ENCODE measurements at regions of chr5 and their contacts with region 1.

Region 1: GRCh38 chr5:146049014-146049703 is 56.2 kb downstream of the PLAC8L1 start:
- DNase-seq: no peak
- ATAC-seq: peak; percentile 42 to 73
- H3K4me3 ChIP-seq: no peak overlapping the region
- H3K27ac ChIP-seq: no peak overlapping the region
- H3K4me1 ChIP-seq: no peaks in the 10 kb centered on the region
- H3K27me3 ChIP-seq: no peaks in the 10 kb centered on the region

Region 2: DNA sequence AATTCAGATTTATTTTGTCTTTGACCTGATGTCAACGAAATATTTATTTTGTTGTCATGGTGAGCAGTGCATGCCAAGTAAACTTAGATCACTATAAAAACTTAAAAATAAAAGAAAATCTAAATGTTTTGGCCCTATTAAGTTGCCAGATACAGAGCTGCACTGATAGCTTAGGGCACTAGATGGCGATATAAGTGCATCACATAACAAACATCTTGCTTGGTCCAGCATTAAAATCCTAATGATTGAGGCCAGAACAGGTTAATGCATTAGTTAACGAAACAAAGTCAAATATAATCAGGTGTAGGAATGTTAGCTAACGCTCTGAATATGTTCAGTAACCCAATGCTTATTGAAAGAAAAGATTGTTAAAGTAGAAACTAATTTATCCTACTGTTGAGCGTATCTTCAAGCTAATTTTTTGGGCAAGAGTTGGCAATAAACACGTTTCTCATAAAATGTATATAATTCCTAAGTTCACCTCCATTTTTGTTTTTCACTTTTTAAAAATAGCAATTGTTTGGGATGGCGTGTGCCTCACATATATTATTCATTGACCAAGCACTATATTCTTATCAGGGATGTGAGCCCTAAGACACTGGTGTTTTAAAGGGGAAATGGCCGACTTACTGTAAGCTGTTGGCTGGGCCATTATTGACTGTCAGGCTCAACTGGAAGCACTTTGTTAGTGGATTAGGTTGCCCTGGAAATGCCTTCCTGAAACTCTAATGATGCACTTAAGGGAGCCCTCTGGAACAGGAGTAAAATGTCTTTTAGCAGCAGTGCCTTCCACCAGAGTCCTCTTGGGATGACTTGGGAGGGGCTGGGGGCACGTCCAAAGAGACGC is 1845.2 kb before region 1 on chr5:
- intact Hi-C with region 1: loop called in 1 of 4 experiments (anchors 5 kb)
- DNase-seq: no peak
- ATAC-seq: peak; percentile 61 to 73
- H3K4me3 ChIP-seq: no peak overlapping the region
- H3K27ac ChIP-seq: no peak overlapping the region
- H3K4me1 ChIP-seq: no peaks in the 10 kb centered on the region
- H3K27me3 ChIP-seq: no peaks in the 10 kb centered on the region

Region 3: DNA sequence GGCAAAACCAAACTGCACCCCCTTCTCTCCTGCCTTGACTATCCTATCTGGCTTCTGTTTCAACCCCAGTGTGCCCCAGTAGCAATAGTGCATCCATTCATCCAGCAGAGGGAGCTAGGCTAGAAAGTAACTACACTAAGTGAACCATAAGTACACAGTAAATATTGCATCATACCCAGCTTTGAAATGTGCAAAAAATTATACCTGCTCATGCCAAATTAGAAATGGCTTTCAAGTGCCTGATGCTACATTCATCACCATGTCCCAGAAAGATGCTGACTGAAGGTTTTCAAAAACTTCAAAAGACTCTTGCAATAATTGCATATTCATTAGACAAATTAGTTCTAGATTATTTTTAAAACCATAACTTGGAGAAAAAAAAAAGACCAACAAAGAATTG is 367.5 kb before region 1 on chr5:
- intact Hi-C with region 1: loop called in 1 of 4 experiments (anchors 10 kb)
- DNase-seq: peak in 2 of 3 donors; percentile 22 to 48
- ATAC-seq: peak; percentile 76 to 89
- H3K4me3 ChIP-seq: no peak overlapping the region
- H3K27ac ChIP-seq: no peak overlapping the region
- H3K4me1 ChIP-seq: no peaks in the 10 kb centered on the region
- H3K27me3 ChIP-seq: no peaks in the 10 kb centered on the region

Region 4: DNA sequence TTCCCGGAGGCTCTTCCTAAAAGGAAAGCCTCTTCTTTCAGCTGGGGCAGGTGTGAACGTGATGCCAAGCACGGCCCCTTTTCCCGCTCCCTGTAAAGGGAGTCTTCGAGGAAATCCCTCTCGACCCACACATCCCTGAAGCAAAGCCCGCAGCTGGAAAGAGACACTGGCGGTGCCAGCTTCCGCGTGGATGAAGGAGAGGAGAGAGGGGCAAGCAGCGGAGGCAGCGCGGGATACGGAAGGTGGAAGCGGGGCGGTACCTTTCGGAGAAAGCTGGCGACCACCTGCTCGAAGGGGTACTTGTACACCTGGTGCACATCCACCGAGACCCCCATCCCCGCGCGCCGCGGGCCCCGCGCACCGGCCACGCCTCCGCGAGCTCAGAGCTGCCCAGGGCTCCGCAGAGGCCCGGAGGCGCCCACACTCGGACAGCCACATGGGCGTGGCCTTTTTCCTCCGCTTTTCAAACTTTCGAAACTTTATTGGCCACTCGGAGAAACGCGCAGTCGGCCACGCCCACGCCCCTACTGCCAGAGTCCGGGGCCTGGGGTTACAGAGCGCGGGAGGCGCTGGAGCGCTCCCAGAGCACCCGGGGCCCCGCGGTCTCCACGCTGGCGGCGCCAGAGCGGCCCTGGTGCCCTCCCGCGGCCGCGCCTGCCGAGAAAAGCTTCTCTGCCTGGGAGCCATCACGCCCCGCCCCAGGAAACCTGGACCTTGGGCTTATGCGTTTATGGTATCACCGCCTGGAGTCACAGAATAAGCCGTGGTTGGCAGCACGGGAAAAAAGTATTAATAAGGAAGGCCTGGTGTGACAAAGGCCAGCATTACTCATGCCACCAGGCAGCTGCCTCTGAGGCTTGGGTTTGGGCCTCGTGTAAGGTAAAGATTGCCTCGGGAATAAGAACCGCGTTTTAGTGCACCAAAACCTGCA is 214.0 kb before region 1 on chr5 and contains the start of gene PRELID2:
- intact Hi-C with region 1: loop called in 2 of 4 experiments (anchors 10 kb)
- DNase-seq: peak; percentile 90 to 96 (median 94)
- ATAC-seq: peak; percentile 94 to 97
- H3K4me3 ChIP-seq: peak within 1 kb of the TSS; percentile 91
- H3K27ac ChIP-seq: peak within 1 kb of the TSS; percentile 16
- H3K4me1 ChIP-seq: no peaks in the 10 kb centered on the region
- H3K27me3 ChIP-seq: no peaks in the 10 kb centered on the region
- total RNA-seq, gene PRELID2: 39.1 to 85.4 (median 44.8) TPM

Region 5: DNA sequence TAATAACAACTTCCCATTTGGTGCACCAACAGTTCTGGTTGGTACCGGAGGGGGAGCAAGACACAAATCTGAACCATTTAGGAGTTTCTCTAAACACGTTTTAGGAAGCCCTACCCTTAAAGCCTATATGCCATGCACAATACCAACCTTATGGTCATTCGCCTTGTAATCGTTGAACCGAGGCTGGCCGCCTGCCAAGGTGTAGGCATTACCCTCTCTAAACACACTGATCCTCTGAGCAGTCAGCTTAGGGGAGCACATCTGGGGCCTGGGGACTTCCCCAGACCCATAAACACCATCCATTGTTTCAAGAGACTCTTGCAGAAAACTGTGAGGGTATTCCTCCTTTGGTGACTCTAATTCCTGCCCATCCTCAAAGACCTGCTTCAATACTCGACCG is 176.7 kb before region 1 on chr5:
- intact Hi-C with region 1: no loop called
- DNase-seq: peak in 2 of 3 donors; percentile 29 to 47
- ATAC-seq: no peak
- H3K4me3 ChIP-seq: no peak overlapping the region
- H3K27ac ChIP-seq: no peak overlapping the region
- H3K4me1 ChIP-seq: no peaks in the 10 kb centered on the region
- H3K27me3 ChIP-seq: no peaks in the 10 kb centered on the region

Region 6: GRCh38 chr5:146068977-146069779 is 20.0 kb after region 1 on chr5:
- intact Hi-C with region 1: no loop called
- DNase-seq: no peak
- ATAC-seq: no peak
- H3K4me3 ChIP-seq: no peak overlapping the region
- H3K27ac ChIP-seq: peak overlapping the region; percentile 51
- H3K4me1 ChIP-seq: peaks cover 6% of the 10 kb centered on the region
- H3K27me3 ChIP-seq: no peaks in the 10 kb centered on the region

Region 7: DNA sequence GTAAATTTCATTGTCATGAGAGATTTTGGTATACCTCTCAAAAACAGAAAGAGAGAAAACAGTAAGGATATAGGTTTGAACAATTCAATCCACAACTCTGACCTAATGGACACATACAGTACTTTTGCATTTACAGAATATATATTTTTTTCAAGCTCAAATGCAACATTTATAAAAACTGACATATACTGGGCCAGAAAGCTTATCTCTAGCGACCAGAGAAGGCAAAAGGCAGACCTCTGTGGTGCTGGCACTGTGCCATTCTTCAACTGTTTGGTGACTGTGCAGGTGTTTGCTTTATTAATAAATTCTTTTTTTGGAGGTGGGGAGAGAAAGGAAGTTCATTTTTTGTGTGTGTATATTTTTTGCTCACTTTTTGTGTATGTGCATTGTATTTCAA is 62.2 kb after region 1 on chr5:
- intact Hi-C with region 1: loop called in 1 of 4 experiments (anchors 10 kb)
- DNase-seq: no peak
- ATAC-seq: no peak
- H3K4me3 ChIP-seq: no peak overlapping the region
- H3K27ac ChIP-seq: no peak overlapping the region
- H3K4me1 ChIP-seq: peaks cover 2% of the 10 kb centered on the region
- H3K27me3 ChIP-seq: no peaks in the 10 kb centered on the region

Region 8: DNA sequence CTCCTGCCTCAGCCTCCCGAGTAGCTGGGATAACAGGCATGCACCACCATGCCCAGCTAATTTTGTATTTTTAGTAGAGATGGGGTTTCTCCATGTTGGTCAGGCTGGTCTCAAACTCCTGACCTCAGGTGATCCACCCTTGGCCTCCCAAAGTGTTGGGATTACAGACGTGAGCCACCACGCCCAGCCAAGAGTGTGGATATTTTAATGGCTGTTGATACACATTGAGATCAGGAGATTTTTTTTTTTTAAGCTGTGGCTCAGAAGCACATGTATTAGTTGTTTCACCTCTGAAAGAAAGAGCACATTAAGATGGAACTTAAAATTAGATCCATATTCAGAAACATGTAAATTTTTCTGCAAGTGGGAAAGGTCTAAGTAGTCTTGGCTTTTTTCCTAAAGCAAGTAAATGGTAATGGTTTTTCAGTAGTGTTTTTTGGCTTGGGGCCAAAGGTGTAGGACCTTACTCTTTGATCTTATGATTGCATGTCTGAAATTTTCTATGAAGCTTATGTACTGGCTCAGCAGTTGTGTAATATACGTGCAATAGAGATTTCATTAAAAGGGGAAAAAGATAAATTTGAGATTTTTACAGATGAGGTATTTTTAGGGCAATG is 164.2 kb after region 1 on chr5:
- intact Hi-C with region 1: no loop called
- DNase-seq: no peak
- ATAC-seq: no peak
- H3K4me3 ChIP-seq: no peak overlapping the region
- H3K27ac ChIP-seq: no peak overlapping the region
- H3K4me1 ChIP-seq: peaks cover 1% of the 10 kb centered on the region
- H3K27me3 ChIP-seq: no peaks in the 10 kb centered on the region